Adrenal gland (tissue), 19 donors: ENCODE measurements at regions of chr3 and their contacts with region 1.

Region 1: GRCh38 chr3:119676771-119677640 is at the start of gene COX17:
- DNase-seq: peak; percentile 94 to 99 (median 97)
- H3K4me3 ChIP-seq: peak within 1 kb of the TSS in 3 of 4 donors; percentile 14 to 83 (median 67)
- H3K27ac ChIP-seq: peak within 1 kb of the TSS; percentile 88 to 97 (median 93)
- H3K4me1 ChIP-seq: peaks cover 8 to 29% of the 10 kb centered on the region in 2 donors
- H3K27me3 ChIP-seq: no peaks in the 10 kb centered on the region
- CTCF ChIP-seq: peak in 1 of 6 experiments; percentile 14
- POLR2A ChIP-seq: peak; percentile 73 to 83
- total RNA-seq, gene COX17: 38.3 to 144 (median 86.5) TPM

Region 2: GRCh38 chr3:119279101-119279554 is 397.9 kb before region 1 on chr3:
- intact Hi-C with region 1: loop called in 1 of 2 experiments (anchors 10 kb)
- DNase-seq: peak in 1 of 7 donors; percentile 25
- H3K4me3 ChIP-seq: no peak overlapping the region
- H3K27ac ChIP-seq: peak overlapping the region in 1 of 5 donors; percentile 75
- H3K4me1 ChIP-seq: no peaks in the 10 kb centered on the region
- H3K27me3 ChIP-seq: no peaks in the 10 kb centered on the region
- CTCF ChIP-seq: no peak
- POLR2A ChIP-seq: no peak

Region 3: GRCh38 chr3:119600732-119601131 is 76.3 kb before region 1 on chr3:
- intact Hi-C with region 1: loop called (anchors 10 kb)
- DNase-seq: peak; percentile 48 to 77 (median 68)
- H3K4me3 ChIP-seq: no peak overlapping the region
- H3K27ac ChIP-seq: peak overlapping the region in 1 of 5 donors; percentile 6
- H3K4me1 ChIP-seq: peaks cover 8 to 20% of the 10 kb centered on the region in 2 donors
- H3K27me3 ChIP-seq: no peaks in the 10 kb centered on the region
- CTCF ChIP-seq: peak; percentile 31 to 74 (median 64)
- POLR2A ChIP-seq: no peak